A673 (cell line): ENCODE measurements at regions of chr4 and their contacts with region 1.

Region 1: GRCh38 chr4:140903522-140904475 is 147.6 kb upstream of the TBC1D9 start:
- DNase-seq: peak; percentile 53
- H3K4me3 ChIP-seq: no peak overlapping the region
- H3K27ac ChIP-seq: no peak overlapping the region
- H3K4me1 ChIP-seq: peaks cover 17% of the 10 kb centered on the region
- H3K27me3 ChIP-seq: no peaks in the 10 kb centered on the region
- CTCF ChIP-seq: no peak

Region 2: GRCh38 chr4:140928880-140929279 is 25.1 kb after region 1 on chr4:
- CTCF ChIA-PET with region 1: no interaction called
- POLR2A ChIA-PET with region 1: interaction called, 25 read pairs
- intact Hi-C with region 1: no loop called
- DNase-seq: no peak
- H3K4me3 ChIP-seq: no peak overlapping the region
- H3K27ac ChIP-seq: no peak overlapping the region
- H3K4me1 ChIP-seq: no peaks in the 10 kb centered on the region
- H3K27me3 ChIP-seq: no peaks in the 10 kb centered on the region
- CTCF ChIP-seq: no peak

Region 3: DNA sequence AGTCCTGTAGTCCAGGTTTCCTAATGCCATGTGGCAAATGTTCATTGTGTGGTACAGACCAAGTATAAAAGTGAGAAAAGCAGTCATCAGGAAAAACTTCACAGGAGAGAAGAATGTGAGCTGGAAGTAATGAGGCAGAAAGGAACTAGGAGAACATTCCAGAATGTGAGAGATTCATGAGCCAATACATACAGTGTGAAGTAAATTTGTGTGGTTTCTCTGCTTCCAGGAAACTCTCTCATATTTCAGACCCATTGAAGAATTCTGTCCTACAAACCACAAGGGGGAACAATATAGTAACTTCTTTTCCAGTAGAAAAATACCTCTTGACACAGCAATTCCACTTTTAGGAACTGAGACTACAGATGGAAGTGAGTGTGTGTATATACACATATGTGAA is 93.0 kb after region 1 on chr4:
- CTCF ChIA-PET with region 1: no interaction called
- POLR2A ChIA-PET with region 1: no interaction called
- intact Hi-C with region 1: no loop called
- DNase-seq: peak; percentile 21
- H3K4me3 ChIP-seq: no peak overlapping the region
- H3K27ac ChIP-seq: no peak overlapping the region
- H3K4me1 ChIP-seq: no peaks in the 10 kb centered on the region
- H3K27me3 ChIP-seq: no peaks in the 10 kb centered on the region
- CTCF ChIP-seq: peak; percentile 42

Region 4: GRCh38 chr4:141768954-141769353 is 865.2 kb after region 1 on chr4:
- CTCF ChIA-PET with region 1: no interaction called
- POLR2A ChIA-PET with region 1: no interaction called
- intact Hi-C with region 1: no loop called
- DNase-seq: peak; percentile 67
- H3K4me3 ChIP-seq: no peak overlapping the region
- H3K27ac ChIP-seq: peak overlapping the region; percentile 22
- H3K4me1 ChIP-seq: peaks cover 8% of the 10 kb centered on the region
- H3K27me3 ChIP-seq: no peaks in the 10 kb centered on the region
- CTCF ChIP-seq: no peak